Activated CD4-positive, alpha-beta memory T cell treated with anti-CD3 and anti-CD28 coated beads, Interleukin-2, amount 10 ng/mL, durations not matched to agents 7 days and 5 days (primary cell): ENCODE measurements at regions of chr12 and their contacts with region 1.

Region 1: DNA sequence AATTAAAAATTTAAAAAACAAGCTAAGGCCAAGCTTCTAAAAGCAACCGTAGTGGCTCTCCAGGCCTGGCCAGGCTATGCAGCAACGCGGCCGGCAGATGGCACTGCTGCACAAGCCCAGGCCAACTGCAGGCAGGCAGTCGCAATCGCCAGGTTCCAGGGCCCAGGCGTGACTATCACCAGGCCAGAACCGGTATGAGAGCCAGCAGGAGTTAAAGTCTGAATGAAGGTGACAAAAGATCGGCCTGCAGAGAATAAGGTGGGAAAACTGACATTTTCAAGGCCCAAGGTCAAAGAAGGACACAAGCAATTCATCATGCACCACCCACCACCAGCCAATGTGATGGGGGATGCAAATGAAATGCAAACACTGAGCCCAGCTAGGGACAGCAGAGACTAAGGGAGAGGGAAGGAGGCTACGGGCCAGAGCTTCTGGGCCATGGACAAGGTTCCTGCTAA is 43.6 kb upstream of the ANO2 start:
- DNase-seq: peak; percentile 76
- H3K4me3 Mint-ChIP-seq: no peak overlapping the region
- H3K27ac Mint-ChIP-seq: no peak overlapping the region
- H3K4me1 Mint-ChIP-seq: no peaks in the 10 kb centered on the region
- H3K27me3 Mint-ChIP-seq: peaks cover 3% of the 10 kb centered on the region

Region 2: GRCh38 chr12:5977556-5977955 is 11.1 kb before region 1 on chr12:
- CTCF ChIA-PET with region 1: interaction called, 13 read pairs
- POLR2A ChIA-PET with region 1: no interaction called
- DNase-seq: no peak
- H3K4me3 Mint-ChIP-seq: no peak overlapping the region
- H3K27ac Mint-ChIP-seq: no peak overlapping the region
- H3K4me1 Mint-ChIP-seq: no peaks in the 10 kb centered on the region
- H3K27me3 Mint-ChIP-seq: peaks cover 4% of the 10 kb centered on the region

Region 3: GRCh38 chr12:6039894-6040568 is 51.3 kb after region 1 on chr12:
- CTCF ChIA-PET with region 1: interaction called, 129 read pairs
- POLR2A ChIA-PET with region 1: no interaction called
- DNase-seq: peak; percentile 52
- H3K4me3 Mint-ChIP-seq: no peak overlapping the region
- H3K27ac Mint-ChIP-seq: no peak overlapping the region
- H3K4me1 Mint-ChIP-seq: no peaks in the 10 kb centered on the region
- H3K27me3 Mint-ChIP-seq: peaks cover 4% of the 10 kb centered on the region

Region 4: GRCh38 chr12:6285063-6285477 is 296.4 kb after region 1 on chr12:
- CTCF ChIA-PET with region 1: interaction called, 25 read pairs
- POLR2A ChIA-PET with region 1: no interaction called
- DNase-seq: peak; percentile 61
- H3K4me3 Mint-ChIP-seq: no peak overlapping the region
- H3K27ac Mint-ChIP-seq: no peak overlapping the region
- H3K4me1 Mint-ChIP-seq: no peaks in the 10 kb centered on the region
- H3K27me3 Mint-ChIP-seq: peaks cover 24% of the 10 kb centered on the region